MCF 10A (cell line): ENCODE measurements at regions of chr5 and their contacts with region 1.

Region 1: GRCh38 chr5:149990518-149991376 is 9.7 kb downstream of the TIGD6 start:
- DNase-seq: peak; percentile 91
- H3K4me3 Mint-ChIP-seq: no peak overlapping the region
- H3K27ac Mint-ChIP-seq: no peak overlapping the region
- H3K4me1 Mint-ChIP-seq: peaks cover 10% of the 10 kb centered on the region
- H3K27me3 Mint-ChIP-seq: no peaks in the 10 kb centered on the region
- CTCF ChIP-seq: peak; percentile 96

Region 2: DNA sequence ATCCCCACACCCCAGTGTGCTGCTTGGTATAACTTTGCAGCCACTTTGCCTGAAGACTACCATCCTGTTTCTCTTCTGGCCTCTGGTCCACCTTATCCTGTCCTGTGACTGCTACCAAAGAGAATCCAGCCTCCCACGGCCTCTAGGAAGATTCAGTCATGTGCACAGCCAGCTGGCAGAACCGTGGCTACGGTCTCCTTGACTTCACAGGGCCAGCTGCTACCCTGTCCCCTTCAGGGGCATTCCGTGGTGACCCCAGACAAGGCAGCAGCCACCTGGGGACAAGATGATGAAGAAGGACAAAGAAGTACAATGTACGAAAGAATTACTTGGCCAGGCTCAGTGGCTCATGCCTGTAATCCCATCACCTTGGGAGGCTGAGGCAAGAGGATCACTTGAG is 144.7 kb before region 1 on chr5:
- CTCF ChIA-PET with region 1: interaction called, 121 read pairs
- POLR2A ChIA-PET with region 1: no interaction called
- intact Hi-C with region 1: no loop called
- DNase-seq: no peak
- H3K4me3 Mint-ChIP-seq: no peak overlapping the region
- H3K27ac Mint-ChIP-seq: no peak overlapping the region
- H3K4me1 Mint-ChIP-seq: no peaks in the 10 kb centered on the region
- H3K27me3 Mint-ChIP-seq: no peaks in the 10 kb centered on the region
- CTCF ChIP-seq: no peak

Region 3: GRCh38 chr5:149969181-149969930 is 21.4 kb before region 1 on chr5:
- CTCF ChIA-PET with region 1: interaction called, 80 read pairs
- POLR2A ChIA-PET with region 1: interaction called, 4 read pairs
- intact Hi-C with region 1: no loop called
- DNase-seq: no peak
- H3K4me3 Mint-ChIP-seq: no peak overlapping the region
- H3K27ac Mint-ChIP-seq: no peak overlapping the region
- H3K4me1 Mint-ChIP-seq: peaks cover 48% of the 10 kb centered on the region
- H3K27me3 Mint-ChIP-seq: no peaks in the 10 kb centered on the region
- CTCF ChIP-seq: no peak

Region 4: GRCh38 chr5:150009671-150010387 is 19.1 kb after region 1 on chr5:
- CTCF ChIA-PET with region 1: interaction called, 20 read pairs
- POLR2A ChIA-PET with region 1: interaction called, 4 read pairs
- intact Hi-C with region 1: no loop called
- DNase-seq: no peak
- H3K4me3 Mint-ChIP-seq: no peak overlapping the region
- H3K27ac Mint-ChIP-seq: peak overlapping the region; percentile 25
- H3K4me1 Mint-ChIP-seq: no peaks in the 10 kb centered on the region
- H3K27me3 Mint-ChIP-seq: no peaks in the 10 kb centered on the region
- CTCF ChIP-seq: no peak

Region 5: DNA sequence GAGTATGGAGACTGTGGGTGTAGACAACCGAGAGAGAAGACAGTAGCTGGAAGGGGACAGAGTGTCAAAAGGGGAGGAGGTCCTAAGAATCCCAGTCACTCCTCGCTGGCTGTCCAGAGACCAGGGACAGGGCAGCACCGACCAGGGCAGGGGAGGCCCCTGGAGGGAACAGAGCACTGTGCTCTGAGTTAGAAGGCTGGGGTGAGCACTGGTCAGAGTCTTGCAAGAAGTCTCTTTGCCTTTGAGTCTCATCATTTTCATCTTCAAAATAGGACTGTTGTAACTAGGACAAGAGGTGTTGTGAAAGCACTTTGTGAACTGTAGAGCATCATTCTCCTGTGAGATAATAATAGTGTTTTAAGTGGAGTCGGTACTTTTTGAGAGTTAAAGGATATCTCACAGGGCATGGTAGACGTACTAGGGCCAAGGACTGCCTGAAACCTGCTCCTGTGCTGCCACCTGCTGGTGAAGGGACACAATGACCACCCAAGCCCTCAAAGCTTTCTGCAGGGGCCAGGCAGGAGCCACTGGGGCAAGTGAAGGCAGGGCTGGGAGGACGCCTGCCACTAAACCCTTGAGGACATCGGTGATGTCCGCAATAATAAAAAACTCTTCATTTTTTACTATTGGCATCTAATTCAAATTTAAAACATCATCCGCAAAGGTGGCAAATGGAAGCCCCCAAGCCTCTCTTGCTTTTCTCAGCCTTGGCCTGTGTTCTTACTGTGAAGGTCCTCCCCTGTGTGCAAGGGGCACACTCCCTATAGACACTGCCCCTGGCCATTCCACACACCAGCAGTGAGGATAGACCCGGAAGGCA is 227.3 kb after region 1 on chr5:
- CTCF ChIA-PET with region 1: interaction called, 5 read pairs
- POLR2A ChIA-PET with region 1: no interaction called
- intact Hi-C with region 1: loop called (anchors 1 kb)
- DNase-seq: peak; percentile 93
- H3K4me3 Mint-ChIP-seq: no peak overlapping the region
- H3K27ac Mint-ChIP-seq: no peak overlapping the region
- H3K4me1 Mint-ChIP-seq: no peaks in the 10 kb centered on the region
- H3K27me3 Mint-ChIP-seq: no peaks in the 10 kb centered on the region
- CTCF ChIP-seq: peak; percentile 98